ENCODE measurements at regions of chr16 and their contacts with region 1.

Region 1: GRCh38 chr16:4200000-4200780 is 41.7 kb downstream of the SRL start:
- DNase-seq: peak; percentile 55 to 89
- H3K4me3 ChIP-seq: no peak overlapping the region
- CTCF ChIP-seq: no peak
- POLR2A ChIP-seq: no peak

Region 2: GRCh38 chr16:2513405-2514322 is 1686.5 kb before region 1 on chr16 and contains the start of gene ATP6V0C:
- intact Hi-C with region 1: no loop called
- DNase-seq: peak; percentile 90 to 98
- H3K4me3 ChIP-seq: peak within 1 kb of the TSS; percentile 95
- CTCF ChIP-seq: no peak
- POLR2A ChIP-seq: peak in 1 of 2 donors; percentile 93
- total RNA-seq, gene ATP6V0C: 63.1 to 218 (median 126) TPM

Region 3: DNA sequence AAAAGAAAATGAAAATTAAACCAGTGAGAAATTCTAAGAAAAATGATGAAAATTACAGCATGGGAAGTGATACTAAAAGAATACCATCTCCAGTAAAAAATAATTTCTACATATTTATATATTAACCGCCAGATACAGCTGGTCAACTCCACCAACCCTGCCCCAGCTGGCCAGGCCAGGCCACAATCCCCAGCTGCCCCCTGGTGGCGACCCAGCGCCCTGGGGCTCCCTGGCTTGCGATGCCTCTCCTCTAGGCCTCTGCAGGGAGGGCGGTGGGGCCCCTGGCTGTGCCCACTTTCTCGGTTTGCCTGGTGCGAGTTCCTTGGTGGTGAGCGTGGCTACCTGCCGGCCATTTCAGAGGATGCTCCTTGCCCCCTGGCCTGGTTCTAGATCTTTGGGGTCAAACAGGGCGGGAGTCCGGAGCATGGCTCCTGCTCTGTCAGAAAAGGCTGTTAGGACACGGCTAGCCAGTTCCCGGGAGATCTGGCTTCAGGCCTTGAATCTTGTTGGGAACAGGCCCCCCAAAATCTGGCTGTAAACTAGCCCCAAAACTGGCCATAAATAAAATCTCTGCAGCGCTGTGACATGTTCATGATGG is 130.2 kb after region 1 on chr16:
- intact Hi-C with region 1: loop called (anchors 5 kb)
- DNase-seq: peak; percentile 65 to 94
- H3K4me3 ChIP-seq: no peak overlapping the region
- CTCF ChIP-seq: peak in 1 of 3 donors; percentile 78
- POLR2A ChIP-seq: no peak

Region 4: GRCh38 chr16:4392382-4393239 is 192.4 kb after region 1 on chr16:
- intact Hi-C with region 1: loop called (anchors 10 kb)
- DNase-seq: no peak
- H3K4me3 ChIP-seq: no peak overlapping the region
- CTCF ChIP-seq: no peak
- POLR2A ChIP-seq: no peak

Measured in lower leg skin (tissue), 4 donors.